PC-3 (cell line): ENCODE measurements at regions of chr14 and their contacts with region 1.

Region 1: GRCh38 chr14:34237081-34237480 is 225.0 kb downstream of the SPTSSA start:
- DNase-seq: peak; percentile 92
- ATAC-seq: peak; percentile 94
- H3K4me3 ChIP-seq: no peak overlapping the region
- H3K27ac ChIP-seq: peak overlapping the region; percentile 57
- H3K4me1 ChIP-seq: peaks cover 25% of the 10 kb centered on the region
- H3K27me3 ChIP-seq: no peaks in the 10 kb centered on the region
- CTCF ChIP-seq: no peak

Region 2: GRCh38 chr14:34300882-34301734 is 64.0 kb after region 1 on chr14:
- CTCF ChIA-PET with region 1: no interaction called
- POLR2A ChIA-PET with region 1: no interaction called
- intact Hi-C with region 1: loop called (anchors 2 kb)
- DNase-seq: peak; percentile 78
- ATAC-seq: peak; percentile 74
- H3K4me3 ChIP-seq: no peak overlapping the region
- H3K27ac ChIP-seq: no peak overlapping the region
- H3K4me1 ChIP-seq: no peaks in the 10 kb centered on the region
- H3K27me3 ChIP-seq: no peaks in the 10 kb centered on the region
- CTCF ChIP-seq: peak; percentile 92

Region 3: GRCh38 chr14:34470319-34470718 is 233.2 kb after region 1 on chr14:
- CTCF ChIA-PET with region 1: interaction called, 10 read pairs
- POLR2A ChIA-PET with region 1: no interaction called
- intact Hi-C with region 1: no loop called
- DNase-seq: no peak
- ATAC-seq: no peak
- H3K4me3 ChIP-seq: no peak overlapping the region
- H3K27ac ChIP-seq: no peak overlapping the region
- H3K4me1 ChIP-seq: no peaks in the 10 kb centered on the region
- H3K27me3 ChIP-seq: no peaks in the 10 kb centered on the region
- CTCF ChIP-seq: no peak